Psoas muscle (tissue), 8 donors: ENCODE measurements at regions of chr1 and their contacts with region 1.

Region 1: GRCh38 chr1:160193091-160193819 is 2.9 kb downstream of the CASQ1 start:
- DNase-seq: peak; percentile 86 to 94
- ATAC-seq: peak; percentile 74 to 85 (median 81)
- H3K4me3 ChIP-seq: peak overlapping the region; percentile 75
- H3K27ac ChIP-seq: peak overlapping the region; percentile 88
- H3K4me1 ChIP-seq: peaks cover 41% of the 10 kb centered on the region
- H3K27me3 ChIP-seq: no peaks in the 10 kb centered on the region
- CTCF ChIP-seq: peak; percentile 97

Region 2: DNA sequence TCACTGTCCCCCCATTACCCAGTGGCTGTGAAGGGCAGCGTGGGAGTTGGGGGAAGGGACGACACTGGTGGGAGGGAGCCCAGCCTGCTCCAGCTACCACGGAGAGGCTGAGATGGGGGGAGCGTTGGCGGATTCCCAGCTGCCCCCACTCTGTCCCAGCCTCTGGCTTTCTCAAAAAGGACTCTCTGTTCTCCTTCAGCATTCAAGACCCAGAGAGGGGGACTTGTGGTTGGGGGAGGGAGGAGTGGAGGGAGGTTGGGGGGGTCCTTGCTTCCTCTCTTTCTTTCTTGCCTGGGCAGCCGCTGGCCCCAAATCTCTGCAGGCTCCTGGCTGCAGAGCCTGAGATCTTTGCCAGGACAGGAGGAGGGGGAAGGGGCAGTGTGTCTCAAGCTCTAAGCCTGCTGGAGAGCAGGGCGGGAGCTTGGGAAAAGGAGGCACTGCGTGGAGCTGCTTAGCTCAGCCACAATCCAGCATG is 75.5 kb before region 1 on chr1:
- intact Hi-C with region 1: loop called in 1 of 2 experiments (anchors 5 kb)
- DNase-seq: peak in 1 of 2 donors; percentile 86
- ATAC-seq: peak; percentile 28 to 59 (median 50)
- H3K4me3 ChIP-seq: peak overlapping the region; percentile 82
- H3K27ac ChIP-seq: peak overlapping the region; percentile 98
- H3K4me1 ChIP-seq: peaks cover 68% of the 10 kb centered on the region
- H3K27me3 ChIP-seq: no peaks in the 10 kb centered on the region
- CTCF ChIP-seq: no peak

Region 3: DNA sequence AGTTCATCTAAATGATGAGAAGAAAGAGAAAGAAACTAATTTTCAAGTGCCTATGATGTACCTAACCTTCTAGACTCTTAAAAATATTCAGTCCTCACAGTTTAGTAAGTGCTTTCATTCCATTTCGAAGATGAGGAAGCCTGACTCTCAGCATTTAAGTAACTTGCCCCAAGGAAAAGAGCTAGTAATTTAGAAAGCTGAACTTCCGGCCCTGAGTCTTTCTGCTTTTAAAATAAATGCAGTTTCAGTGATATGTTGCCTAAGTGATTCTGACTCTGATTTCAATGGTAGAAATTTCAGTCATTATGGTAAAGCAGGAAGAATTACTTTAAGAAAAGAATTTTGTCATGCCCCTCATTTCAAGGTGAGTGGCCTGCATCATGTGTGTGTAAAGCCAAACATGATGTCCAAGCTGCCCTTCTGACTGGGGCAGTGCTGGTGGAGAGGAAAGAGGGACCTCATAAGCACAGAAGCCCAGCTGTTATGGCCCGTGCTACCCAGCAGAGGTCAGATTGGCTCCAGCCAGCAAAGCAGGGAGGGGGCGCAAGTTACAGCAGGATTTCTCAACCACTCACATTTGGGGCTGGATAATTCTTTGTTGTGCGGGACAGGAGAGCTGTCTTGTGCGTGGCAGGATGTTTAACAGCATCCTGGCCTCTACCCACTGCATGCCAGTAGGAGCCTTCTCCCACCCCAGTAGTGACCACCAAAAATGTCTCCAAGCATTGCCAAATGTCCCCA is 31.1 kb before region 1 on chr1:
- intact Hi-C with region 1: no loop called
- DNase-seq: no peak
- ATAC-seq: peak; percentile 74 to 81 (median 79)
- H3K4me3 ChIP-seq: no peak overlapping the region
- H3K27ac ChIP-seq: no peak overlapping the region
- H3K4me1 ChIP-seq: no peaks in the 10 kb centered on the region
- H3K27me3 ChIP-seq: no peaks in the 10 kb centered on the region
- CTCF ChIP-seq: peak; percentile 53

Region 4: DNA sequence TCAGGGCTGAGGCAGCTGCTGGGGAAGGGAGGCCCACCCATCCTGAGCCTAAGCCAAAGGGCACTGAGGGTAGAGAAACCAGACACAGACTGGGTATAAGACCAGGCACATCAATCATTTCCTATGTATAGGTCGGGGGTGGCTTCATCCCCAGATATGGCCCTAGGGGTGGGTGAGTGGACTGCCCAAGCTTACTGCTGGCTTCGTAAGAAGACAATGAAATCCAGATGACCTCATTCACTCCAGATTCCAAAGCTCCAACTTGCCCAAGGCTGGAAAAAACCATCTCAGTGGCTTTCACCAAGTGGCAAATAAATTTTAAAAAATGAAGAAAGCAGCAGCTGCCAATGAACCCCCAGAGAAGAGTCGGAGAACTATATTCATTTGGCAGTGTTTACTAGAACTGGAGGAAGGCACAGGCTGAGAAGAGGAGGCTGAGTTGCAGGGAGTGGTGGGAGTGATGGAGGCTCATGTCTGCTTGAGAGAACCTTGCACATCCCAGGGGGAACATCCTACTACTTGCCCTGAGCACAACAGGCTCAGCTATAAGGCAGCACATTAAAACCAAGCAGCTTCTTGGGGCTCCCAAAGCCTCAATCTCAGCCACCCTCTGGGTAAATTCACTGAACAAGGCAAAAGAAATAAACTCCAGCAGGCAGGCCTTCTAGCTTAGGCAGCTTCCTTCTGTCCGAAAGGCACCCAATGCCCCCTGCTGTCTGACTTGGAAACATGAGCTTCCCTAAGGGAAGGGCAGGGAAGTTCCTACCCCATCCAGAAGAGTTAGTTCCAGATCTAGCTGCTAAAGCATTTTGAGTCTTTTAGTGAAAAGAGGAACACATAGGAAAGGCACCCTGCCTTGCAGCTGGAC is 26.0 kb after region 1 on chr1:
- intact Hi-C with region 1: loop called in 1 of 2 experiments (anchors 2 kb)
- DNase-seq: peak in 1 of 2 donors; percentile 40
- ATAC-seq: peak; percentile 67 to 85 (median 75)
- H3K4me3 ChIP-seq: no peak overlapping the region
- H3K27ac ChIP-seq: peak overlapping the region; percentile 63
- H3K4me1 ChIP-seq: peaks cover 19% of the 10 kb centered on the region
- H3K27me3 ChIP-seq: no peaks in the 10 kb centered on the region
- CTCF ChIP-seq: peak; percentile 66

Region 5: DNA sequence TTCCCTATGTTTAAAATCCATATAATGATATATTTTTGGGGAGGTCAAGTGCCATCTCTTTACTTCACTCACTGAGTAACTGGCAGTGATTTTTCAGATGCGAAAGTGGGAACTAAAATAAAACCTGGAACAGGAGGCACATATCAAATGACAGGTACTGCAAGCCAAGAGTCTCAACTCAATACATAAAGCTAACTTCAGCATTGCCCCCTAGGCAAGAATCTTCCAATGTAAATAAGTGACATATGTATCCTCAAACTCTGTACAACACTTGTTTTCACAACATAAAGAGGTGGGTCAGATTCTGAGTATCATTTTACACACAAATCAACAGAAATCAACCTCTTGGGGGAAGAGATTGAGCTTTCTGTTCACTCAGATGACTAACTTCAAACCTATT is 51.0 kb after region 1 on chr1:
- intact Hi-C with region 1: loop called in 1 of 2 experiments (anchors 5 kb)
- DNase-seq: no peak
- ATAC-seq: peak; percentile 41 to 77 (median 59)
- H3K4me3 ChIP-seq: peak overlapping the region; percentile 11
- H3K27ac ChIP-seq: peak overlapping the region; percentile 62
- H3K4me1 ChIP-seq: peaks cover 59% of the 10 kb centered on the region
- H3K27me3 ChIP-seq: no peaks in the 10 kb centered on the region
- CTCF ChIP-seq: no peak

Region 6: GRCh38 chr1:160251687-160252526 is 58.7 kb after region 1 on chr1:
- intact Hi-C with region 1: loop called in 1 of 2 experiments (anchors 2 kb)
- DNase-seq: peak; percentile 56 to 74
- ATAC-seq: peak; percentile 93 to 94 (median 94)
- H3K4me3 ChIP-seq: no peak overlapping the region
- H3K27ac ChIP-seq: peak overlapping the region; percentile 58
- H3K4me1 ChIP-seq: peaks cover 45% of the 10 kb centered on the region
- H3K27me3 ChIP-seq: no peaks in the 10 kb centered on the region
- CTCF ChIP-seq: peak; percentile 80